ENCODE measurements at regions of chr14 and their contacts with region 1.

Region 1: DNA sequence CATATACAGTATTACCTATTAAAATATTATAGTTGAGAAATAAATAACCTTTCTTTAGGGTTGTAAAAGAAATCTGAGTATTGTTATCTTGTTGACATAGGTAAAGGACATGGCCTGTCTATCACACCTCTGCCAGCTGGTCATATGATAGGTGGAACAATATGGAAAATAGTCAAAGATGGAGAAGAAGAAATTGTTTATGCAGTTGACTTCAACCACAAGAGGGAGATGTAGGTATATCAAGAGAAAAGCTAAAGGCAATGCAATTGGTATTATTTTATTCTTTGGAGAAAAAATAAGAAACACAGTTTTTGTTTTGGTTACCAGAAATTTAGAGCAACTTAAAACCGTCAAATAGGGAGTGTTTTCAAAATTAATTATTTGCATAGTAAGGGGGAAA is 13.5 kb downstream of the CPSF2 start:
- DNase-seq: peak in 3 of 14 experiments; percentile 31 to 40 (median 33)
- ATAC-seq: no peak
- H3K4me3 ChIP-seq: no peak overlapping the region
- H3K4me3 Mint-ChIP-seq: no peak overlapping the region
- H3K27ac ChIP-seq: no peak overlapping the region
- H3K27ac Mint-ChIP-seq: no peak overlapping the region
- H3K4me1 ChIP-seq: no peaks in the 10 kb centered on the region
- H3K4me1 Mint-ChIP-seq: no peaks in the 10 kb centered on the region
- H3K27me3 ChIP-seq: no peaks in the 10 kb centered on the region
- H3K27me3 Mint-ChIP-seq: no peaks in the 10 kb centered on the region
- CTCF ChIP-seq: peak; percentile 52

Region 2: GRCh38 chr14:92121670-92122350 is 13.5 kb before region 1 on chr14 and contains the starts of genes CPSF2 and NDUFB1:
- CTCF ChIA-PET with region 1: interaction called, 13 read pairs
- POLR2A ChIA-PET with region 1: interaction called, 15 read pairs
- intact Hi-C with region 1: no loop called
- DNase-seq: peak; percentile 74 to 91 (median 82)
- ATAC-seq: peak; percentile 87
- H3K4me3 ChIP-seq: peak within 1 kb of the TSS; percentile 100
- H3K4me3 Mint-ChIP-seq: peak within 1 kb of the TSS; percentile 100
- H3K27ac ChIP-seq: peak within 1 kb of the TSS; percentile 84 to 93
- H3K27ac Mint-ChIP-seq: peak within 1 kb of the TSS; percentile 100
- H3K4me1 ChIP-seq: peaks cover 39% of the 10 kb centered on the region
- H3K4me1 Mint-ChIP-seq: peaks cover 59% of the 10 kb centered on the region
- H3K27me3 ChIP-seq: no peaks in the 10 kb centered on the region
- H3K27me3 Mint-ChIP-seq: no peaks in the 10 kb centered on the region
- CTCF ChIP-seq: no peak
- total RNA-seq, gene CPSF2: 12.4 to 12.9 TPM
- total RNA-seq, gene NDUFB1: 45.3 to 48.1 TPM

Region 3: DNA sequence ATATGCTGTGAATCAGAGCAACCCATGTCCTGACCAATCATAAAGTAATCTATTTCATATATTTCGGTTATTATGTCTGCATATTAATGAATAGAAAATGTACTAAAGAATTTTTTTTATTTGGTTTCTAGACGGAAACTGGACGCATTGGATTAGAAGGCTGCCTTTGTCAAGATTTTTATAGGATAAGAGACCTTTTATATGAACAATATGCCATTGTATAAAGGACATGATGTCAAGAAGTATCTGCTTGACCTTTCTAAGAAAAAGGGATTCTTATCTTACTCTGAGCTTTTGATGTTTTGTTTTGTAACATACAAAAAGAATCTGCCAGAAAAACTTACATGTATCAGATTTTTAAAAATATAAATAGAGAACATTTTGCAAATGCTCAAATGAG is 26.3 kb after region 1 on chr14:
- CTCF ChIA-PET with region 1: no interaction called
- POLR2A ChIA-PET with region 1: no interaction called
- intact Hi-C with region 1: no loop called
- DNase-seq: no peak
- ATAC-seq: no peak
- H3K4me3 ChIP-seq: no peak overlapping the region
- H3K4me3 Mint-ChIP-seq: no peak overlapping the region
- H3K27ac ChIP-seq: no peak overlapping the region
- H3K27ac Mint-ChIP-seq: no peak overlapping the region
- H3K4me1 ChIP-seq: no peaks in the 10 kb centered on the region
- H3K4me1 Mint-ChIP-seq: no peaks in the 10 kb centered on the region
- H3K27me3 ChIP-seq: no peaks in the 10 kb centered on the region
- H3K27me3 Mint-ChIP-seq: no peaks in the 10 kb centered on the region
- CTCF ChIP-seq: no peak

Region 4: GRCh38 chr14:92317511-92317910 is 182.2 kb after region 1 on chr14:
- CTCF ChIA-PET with region 1: no interaction called
- POLR2A ChIA-PET with region 1: no interaction called
- intact Hi-C with region 1: no loop called
- DNase-seq: no peak
- ATAC-seq: no peak
- H3K4me3 ChIP-seq: no peak overlapping the region
- H3K4me3 Mint-ChIP-seq: no peak overlapping the region
- H3K27ac ChIP-seq: no peak overlapping the region
- H3K27ac Mint-ChIP-seq: no peak overlapping the region
- H3K4me1 ChIP-seq: no peaks in the 10 kb centered on the region
- H3K4me1 Mint-ChIP-seq: no peaks in the 10 kb centered on the region
- H3K27me3 ChIP-seq: peaks cover 16 to 23% of the 10 kb centered on the region in 2 experiments
- H3K27me3 Mint-ChIP-seq: peaks cover 43% of the 10 kb centered on the region
- CTCF ChIP-seq: no peak

Region 5: GRCh38 chr14:92603309-92604242 is 468.3 kb after region 1 on chr14:
- CTCF ChIA-PET with region 1: interaction called, 3 read pairs
- POLR2A ChIA-PET with region 1: no interaction called
- intact Hi-C with region 1: loop called (anchors 1 to 2 kb)
- DNase-seq: peak; percentile 45 to 80 (median 60)
- ATAC-seq: peak; percentile 99
- H3K4me3 ChIP-seq: no peak overlapping the region
- H3K4me3 Mint-ChIP-seq: peak overlapping the region; percentile 83
- H3K27ac ChIP-seq: no peak overlapping the region
- H3K27ac Mint-ChIP-seq: peak overlapping the region; percentile 77
- H3K4me1 ChIP-seq: peaks cover 19% of the 10 kb centered on the region
- H3K4me1 Mint-ChIP-seq: peaks cover 35% of the 10 kb centered on the region
- H3K27me3 ChIP-seq: no peaks in the 10 kb centered on the region
- H3K27me3 Mint-ChIP-seq: no peaks in the 10 kb centered on the region
- CTCF ChIP-seq: peak; percentile 70

Region 6: GRCh38 chr14:92680781-92681650 is 545.7 kb after region 1 on chr14:
- CTCF ChIA-PET with region 1: interaction called, 4 read pairs
- POLR2A ChIA-PET with region 1: no interaction called
- intact Hi-C with region 1: loop called (anchors 2 to 5 kb)
- DNase-seq: peak; percentile 56 to 88 (median 72)
- ATAC-seq: peak; percentile 84
- H3K4me3 ChIP-seq: no peak overlapping the region
- H3K4me3 Mint-ChIP-seq: no peak overlapping the region
- H3K27ac ChIP-seq: peak overlapping the region in 1 of 2 donors; percentile 4
- H3K27ac Mint-ChIP-seq: peak overlapping the region; percentile 86
- H3K4me1 ChIP-seq: peaks cover 33% of the 10 kb centered on the region
- H3K4me1 Mint-ChIP-seq: peaks cover 25% of the 10 kb centered on the region
- H3K27me3 ChIP-seq: no peaks in the 10 kb centered on the region
- H3K27me3 Mint-ChIP-seq: no peaks in the 10 kb centered on the region
- CTCF ChIP-seq: peak; percentile 94

Region 7: GRCh38 chr14:92783816-92784431 is 648.7 kb after region 1 on chr14:
- CTCF ChIA-PET with region 1: no interaction called
- POLR2A ChIA-PET with region 1: no interaction called
- intact Hi-C with region 1: loop called in 1 of 2 experiments (anchors 5 kb)
- DNase-seq: peak in 5 of 14 experiments; percentile 14 to 67 (median 63)
- ATAC-seq: peak; percentile 85
- H3K4me3 ChIP-seq: no peak overlapping the region
- H3K4me3 Mint-ChIP-seq: no peak overlapping the region
- H3K27ac ChIP-seq: no peak overlapping the region
- H3K27ac Mint-ChIP-seq: no peak overlapping the region
- H3K4me1 ChIP-seq: no peaks in the 10 kb centered on the region
- H3K4me1 Mint-ChIP-seq: no peaks in the 10 kb centered on the region
- H3K27me3 ChIP-seq: no peaks in the 10 kb centered on the region
- H3K27me3 Mint-ChIP-seq: no peaks in the 10 kb centered on the region
- CTCF ChIP-seq: peak; percentile 77